BJ (cell line): ENCODE measurements at regions of chr6 and their contacts with region 1.

Region 1: GRCh38 chr6:8180327-8181159 is 78.2 kb upstream of the EEF1E1 start:
- DNase-seq: peak; percentile 77
- H3K4me3 ChIP-seq: no peak overlapping the region
- H3K27me3 ChIP-seq: no peaks in the 10 kb centered on the region
- CTCF ChIP-seq: no peak

Region 2: GRCh38 chr6:6826095-6826901 is 1354.2 kb before region 1 on chr6:
- CTCF ChIA-PET with region 1: no interaction called
- POLR2A ChIA-PET with region 1: no interaction called
- DNase-seq: no peak
- H3K4me3 ChIP-seq: no peak overlapping the region
- H3K27me3 ChIP-seq: no peaks in the 10 kb centered on the region
- CTCF ChIP-seq: no peak

Region 3: DNA sequence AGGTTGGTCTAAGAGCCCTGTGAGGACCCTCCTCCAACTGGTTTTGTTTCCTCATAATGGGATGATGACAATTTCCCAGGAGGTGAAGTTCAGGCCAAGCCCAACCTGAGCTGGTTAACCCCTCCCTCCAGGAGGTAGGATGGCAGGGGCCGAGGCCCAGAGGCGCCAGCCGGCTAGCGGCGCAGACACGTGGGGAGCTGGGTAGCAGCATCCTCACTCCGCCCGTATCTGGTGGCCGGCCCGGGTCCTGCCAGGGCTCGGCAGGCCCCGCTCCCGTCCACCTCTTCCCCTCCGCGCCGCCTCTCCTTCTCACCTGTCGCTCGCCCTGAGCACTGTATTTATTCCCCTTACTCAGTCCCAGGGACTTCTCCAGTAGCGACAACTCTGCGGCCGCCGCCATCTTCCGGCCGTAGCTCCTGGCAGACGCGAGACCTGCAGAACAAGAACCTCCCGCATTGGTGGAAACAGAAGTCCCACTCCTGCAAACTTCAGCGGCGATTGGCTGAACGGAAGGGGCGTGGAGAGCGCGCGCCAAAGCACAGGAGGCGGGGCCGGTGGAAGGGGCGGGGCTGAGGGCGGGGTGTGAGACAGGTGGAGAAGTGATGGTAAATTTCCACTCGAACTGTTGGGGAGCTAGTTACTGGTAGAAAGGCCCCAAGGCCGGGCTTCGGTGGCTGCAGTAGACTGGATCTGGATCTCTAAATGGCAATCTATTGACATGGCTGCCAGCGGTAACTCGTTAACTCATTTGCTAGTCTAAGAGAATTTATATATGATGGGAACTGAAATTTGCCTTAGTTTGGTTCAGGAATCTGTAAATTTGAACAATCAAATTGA is 78.2 kb before region 1 on chr6 and contains the start of gene EEF1E1:
- CTCF ChIA-PET with region 1: no interaction called
- POLR2A ChIA-PET with region 1: interaction called, 16 read pairs
- DNase-seq: peak; percentile 56
- H3K4me3 ChIP-seq: peak within 1 kb of the TSS; percentile 74
- H3K27me3 ChIP-seq: no peaks in the 10 kb centered on the region
- CTCF ChIP-seq: 0 out of 2 replicates have a peak, but pooled peaks have one; percentile 5
- polyA plus RNA-seq, gene EEF1E1: 26.4 and 44.9 TPM in 2 replicates